ENCODE measurements at regions of chr9 and their contacts with region 1.

Region 1: GRCh38 chr9:75890472-75891276 is at the start of gene PCSK5:
- DNase-seq: peak; percentile 91 to 95 (median 93)
- H3K4me3 ChIP-seq: peak within 1 kb of the TSS; percentile 68
- H3K27ac ChIP-seq: peak within 1 kb of the TSS; percentile 91 to 94
- H3K4me1 ChIP-seq: peaks cover 6% of the 10 kb centered on the region
- H3K27me3 ChIP-seq: no peaks in the 10 kb centered on the region
- CTCF ChIP-seq: peak in 2 of 3 donors; percentile 9 to 45
- EP300 ChIP-seq: no peak
- POLR2A ChIP-seq: peak; percentile 93
- total RNA-seq, gene PCSK5: 18.7 to 41.8 (median 31.6) TPM

Region 2: DNA sequence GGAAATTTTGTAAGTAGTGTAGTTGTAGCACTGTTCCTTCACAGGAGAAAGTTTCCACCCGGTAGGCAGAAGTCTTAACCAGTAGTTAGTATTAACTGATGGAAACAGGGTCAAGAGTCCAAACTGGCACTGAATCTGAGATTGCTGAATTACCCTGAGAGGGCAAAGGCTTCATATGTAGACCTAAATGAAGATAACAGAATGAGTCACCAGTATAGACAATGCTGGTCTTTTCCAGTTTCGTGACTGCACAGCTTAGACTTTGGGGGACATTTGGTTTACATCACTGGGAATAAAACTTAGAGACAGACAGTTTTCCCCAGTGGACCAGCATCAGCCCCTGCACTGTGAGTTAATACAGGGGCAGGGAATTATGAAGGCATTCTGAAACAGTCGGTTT is 60.3 kb after region 1 on chr9:
- intact Hi-C with region 1: no loop called
- DNase-seq: no peak
- H3K4me3 ChIP-seq: no peak overlapping the region
- H3K27ac ChIP-seq: no peak overlapping the region
- H3K4me1 ChIP-seq: peaks cover 3% of the 10 kb centered on the region
- H3K27me3 ChIP-seq: no peaks in the 10 kb centered on the region
- CTCF ChIP-seq: no peak
- EP300 ChIP-seq: no peak
- POLR2A ChIP-seq: no peak

Region 3: GRCh38 chr9:75964427-75964826 is 73.8 kb after region 1 on chr9:
- intact Hi-C with region 1: no loop called
- DNase-seq: no peak
- H3K4me3 ChIP-seq: no peak overlapping the region
- H3K27ac ChIP-seq: no peak overlapping the region
- H3K4me1 ChIP-seq: peaks cover 7% of the 10 kb centered on the region
- H3K27me3 ChIP-seq: no peaks in the 10 kb centered on the region
- CTCF ChIP-seq: no peak
- EP300 ChIP-seq: no peak
- POLR2A ChIP-seq: no peak

Region 4: DNA sequence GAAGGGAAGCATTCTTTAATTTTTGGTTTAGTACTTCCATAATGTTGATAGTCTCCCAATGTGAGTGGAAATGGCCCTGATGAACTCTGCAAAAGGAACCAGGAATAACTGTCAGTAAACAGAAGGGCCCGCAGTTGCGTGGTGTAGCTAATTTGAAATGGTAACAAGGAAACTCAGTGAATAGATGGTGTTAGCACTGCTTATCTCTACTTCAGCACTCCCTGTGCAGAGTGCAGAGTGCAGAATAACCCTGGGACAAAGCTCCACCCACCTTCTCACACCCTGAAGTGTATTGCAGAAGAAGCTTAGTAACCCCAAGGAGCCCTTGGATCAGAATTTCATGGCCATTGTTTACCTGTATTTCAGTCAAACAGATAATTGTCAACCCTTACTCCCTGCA is 158.7 kb after region 1 on chr9:
- intact Hi-C with region 1: loop called in 1 of 4 experiments (anchors 10 kb)
- DNase-seq: no peak
- H3K4me3 ChIP-seq: no peak overlapping the region
- H3K27ac ChIP-seq: no peak overlapping the region
- H3K4me1 ChIP-seq: no peaks in the 10 kb centered on the region
- H3K27me3 ChIP-seq: no peaks in the 10 kb centered on the region
- CTCF ChIP-seq: no peak
- EP300 ChIP-seq: no peak
- POLR2A ChIP-seq: no peak

Region 5: DNA sequence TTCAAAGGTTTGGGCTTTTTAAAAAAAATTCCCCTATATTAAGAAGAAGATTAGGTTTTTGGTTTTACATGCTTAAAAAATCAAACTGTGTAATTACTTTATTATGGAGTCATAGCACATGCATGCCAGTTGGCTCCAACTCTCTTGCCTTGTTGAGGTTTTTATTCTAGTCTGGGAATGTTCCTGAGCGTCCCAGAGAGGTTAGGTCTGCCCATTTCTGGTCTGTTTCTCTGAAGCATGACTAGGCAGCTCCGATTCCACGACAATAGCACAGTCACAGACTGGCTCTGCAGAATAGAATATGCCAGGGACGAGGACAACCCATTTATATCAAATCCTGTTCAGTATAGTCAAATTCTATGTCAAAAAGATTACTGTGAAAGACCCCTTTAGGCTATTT is 216.8 kb after region 1 on chr9:
- intact Hi-C with region 1: loop called in 1 of 4 experiments (anchors 10 kb)
- DNase-seq: peak in 1 of 5 donors; percentile 32
- H3K4me3 ChIP-seq: no peak overlapping the region
- H3K27ac ChIP-seq: no peak overlapping the region
- H3K4me1 ChIP-seq: peaks cover 22% of the 10 kb centered on the region
- H3K27me3 ChIP-seq: no peaks in the 10 kb centered on the region
- CTCF ChIP-seq: no peak
- EP300 ChIP-seq: no peak
- POLR2A ChIP-seq: no peak

Region 6: DNA sequence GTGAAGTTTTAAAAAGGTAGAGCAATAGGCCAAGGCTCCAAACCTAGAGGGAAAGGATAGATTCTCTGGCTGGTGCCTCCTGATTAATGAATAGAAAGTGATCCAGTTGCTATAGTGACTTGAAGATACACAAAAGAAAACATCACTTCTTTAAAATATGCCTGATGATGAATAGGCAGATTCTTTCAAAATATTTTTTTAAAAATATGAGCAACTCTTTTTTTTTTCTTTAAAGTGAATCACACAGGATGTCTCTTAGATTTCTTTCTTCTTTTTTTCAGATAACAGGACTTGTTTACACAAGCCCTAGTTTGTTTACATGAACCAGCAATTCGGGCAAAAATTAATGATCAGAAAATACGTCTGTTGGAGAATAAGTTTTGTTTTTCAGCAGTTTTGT is 379.1 kb after region 1 on chr9:
- intact Hi-C with region 1: loop called in 1 of 4 experiments (anchors 10 kb)
- DNase-seq: no peak
- H3K4me3 ChIP-seq: no peak overlapping the region
- H3K27ac ChIP-seq: peak overlapping the region in 1 of 2 donors; percentile 70
- H3K4me1 ChIP-seq: peaks cover 8% of the 10 kb centered on the region
- H3K27me3 ChIP-seq: no peaks in the 10 kb centered on the region
- CTCF ChIP-seq: no peak
- EP300 ChIP-seq: no peak
- POLR2A ChIP-seq: no peak

Region 7: DNA sequence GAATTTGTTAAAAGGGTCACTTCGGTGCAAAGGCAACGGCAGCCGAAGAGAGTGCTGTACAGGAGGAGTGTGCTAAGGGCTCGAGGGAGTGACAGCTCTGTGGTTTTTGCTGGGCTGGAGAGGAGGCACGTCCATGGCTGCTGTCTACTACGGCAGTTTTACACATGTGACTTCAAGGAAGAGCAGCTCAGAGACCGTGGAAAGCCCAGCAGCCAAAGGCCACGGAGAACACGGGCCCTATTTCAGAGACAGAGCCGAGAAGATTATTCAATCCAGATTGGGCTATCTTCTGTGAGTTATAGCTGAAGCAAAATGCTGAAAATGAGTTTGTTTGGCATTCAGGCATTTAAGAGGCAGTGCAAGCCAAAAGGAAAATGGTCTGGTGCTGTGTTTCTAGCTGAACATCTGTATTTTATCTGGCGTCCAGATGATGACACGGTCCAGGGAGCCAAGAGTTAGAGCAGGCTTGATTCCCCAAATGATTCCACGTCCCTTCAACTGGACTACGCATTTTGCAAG is 407.1 kb after region 1 on chr9:
- intact Hi-C with region 1: loop called in 2 of 4 experiments (anchors 10 kb)
- DNase-seq: peak; percentile 39 to 55 (median 50)
- H3K4me3 ChIP-seq: no peak overlapping the region
- H3K27ac ChIP-seq: peak overlapping the region; percentile 51 to 77
- H3K4me1 ChIP-seq: peaks cover 5% of the 10 kb centered on the region
- H3K27me3 ChIP-seq: no peaks in the 10 kb centered on the region
- CTCF ChIP-seq: no peak
- EP300 ChIP-seq: no peak
- POLR2A ChIP-seq: no peak

Region 8: DNA sequence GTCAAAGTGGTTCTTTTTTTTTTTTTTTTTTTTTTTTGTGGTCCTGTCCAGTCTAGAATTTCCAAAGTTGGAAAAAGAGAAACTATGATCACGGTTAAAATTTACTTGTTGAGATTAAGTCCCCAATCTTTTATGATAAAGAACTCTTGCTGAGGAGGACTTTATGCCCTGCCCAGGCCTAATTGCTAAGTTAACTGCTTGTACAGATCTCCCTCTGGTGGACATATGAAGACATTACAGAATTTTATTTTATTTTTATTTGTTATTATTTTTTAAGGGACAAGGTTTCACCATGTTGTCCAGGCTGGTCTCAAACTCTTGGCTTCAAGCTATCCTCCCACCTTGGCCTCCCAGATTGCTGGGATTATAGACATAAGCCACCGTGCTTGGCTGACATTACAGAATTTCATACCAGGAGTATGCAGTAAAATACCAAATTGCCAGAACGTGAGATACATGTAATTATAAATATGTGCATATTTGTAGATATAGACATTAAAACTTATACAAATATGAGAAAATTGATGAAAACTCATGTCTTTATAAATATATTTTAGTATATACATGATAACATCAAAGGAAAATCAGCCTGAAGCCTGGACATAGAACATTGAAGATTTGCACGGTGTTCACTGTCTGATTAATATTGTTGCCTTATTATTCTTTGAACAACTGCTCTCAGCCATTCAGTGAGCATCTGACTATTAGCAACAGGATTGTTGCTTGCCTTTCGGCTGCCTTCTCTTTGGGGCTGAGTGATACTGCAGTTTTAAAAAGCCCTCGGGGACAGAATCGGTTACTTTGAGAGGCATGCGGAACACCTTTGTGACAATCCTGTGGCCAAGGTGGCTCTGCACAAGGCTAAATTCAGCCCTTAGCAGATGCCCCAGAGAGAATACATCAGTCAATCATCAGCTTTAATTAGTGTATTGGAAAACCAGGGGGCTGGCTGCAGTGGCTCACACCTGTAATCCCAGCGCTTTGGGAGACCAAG is 412.6 kb after region 1 on chr9:
- intact Hi-C with region 1: loop called in 2 of 4 experiments (anchors 10 kb)
- DNase-seq: peak in 2 of 5 donors; percentile 13 to 33
- H3K4me3 ChIP-seq: no peak overlapping the region
- H3K27ac ChIP-seq: no peak overlapping the region
- H3K4me1 ChIP-seq: peaks cover 4% of the 10 kb centered on the region
- H3K27me3 ChIP-seq: no peaks in the 10 kb centered on the region
- CTCF ChIP-seq: peak; percentile 63 to 82 (median 81)
- EP300 ChIP-seq: no peak
- POLR2A ChIP-seq: no peak

Measured in ovary (tissue), 10 donors.